ENCODE measurements at regions of chr4 and their contacts with region 1.

Region 1: GRCh38 chr4:132709056-132709455 is 440.0 kb upstream of the PCDH10 start:
- DNase-seq: no peak
- H3K4me3 ChIP-seq: no peak overlapping the region
- H3K27ac ChIP-seq: no peak overlapping the region
- H3K4me1 ChIP-seq: no peaks in the 10 kb centered on the region
- H3K27me3 ChIP-seq: no peaks in the 10 kb centered on the region
- CTCF ChIP-seq: no peak
- POLR2A ChIP-seq: no peak

Region 2: DNA sequence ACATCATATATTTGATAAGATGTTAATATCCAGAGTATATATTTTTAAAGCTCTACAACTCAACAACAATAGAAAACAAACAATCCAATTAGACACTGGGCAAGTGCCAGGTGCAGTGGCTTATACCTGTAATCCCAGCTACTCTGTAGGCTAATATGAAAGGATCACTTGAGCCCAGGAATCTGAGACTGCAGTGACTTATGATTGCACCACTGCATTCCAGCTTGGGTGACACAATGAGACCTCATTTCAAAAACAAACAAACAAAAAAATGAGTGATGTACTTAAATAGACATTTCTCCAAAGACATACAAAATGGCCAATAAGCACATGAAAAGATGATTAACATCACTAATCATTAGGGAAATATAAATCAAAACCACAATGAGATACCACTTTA is 83.2 kb after region 1 on chr4:
- intact Hi-C with region 1: loop called (anchors 5 kb)
- DNase-seq: no peak
- H3K4me3 ChIP-seq: no peak overlapping the region
- H3K27ac ChIP-seq: no peak overlapping the region
- H3K4me1 ChIP-seq: no peaks in the 10 kb centered on the region
- H3K27me3 ChIP-seq: no peaks in the 10 kb centered on the region
- CTCF ChIP-seq: no peak
- POLR2A ChIP-seq: no peak